CD4-positive, alpha-beta memory T cell (primary cell): ENCODE measurements at regions of chr19 and their contacts with region 1.

Region 1: GRCh38 chr19:42132851-42133528 is 744 bp upstream of the POU2F2 start:
- DNase-seq: peak; percentile 79 to 91 (median 84)
- H3K4me3 ChIP-seq: peak overlapping the region; percentile 43 to 97
- H3K4me3 Mint-ChIP-seq: peak overlapping the region; percentile 87 to 96 (median 92)
- H3K27ac ChIP-seq: peak overlapping the region; percentile 74
- H3K27ac Mint-ChIP-seq: peak overlapping the region; percentile 84 to 99 (median 88)
- H3K4me1 ChIP-seq: peaks cover 71% of the 10 kb centered on the region
- H3K4me1 Mint-ChIP-seq: peaks cover 39 to 87% (median 59%) of the 10 kb centered on the region in 4 donors
- H3K27me3 ChIP-seq: no peaks in the 10 kb centered on the region
- H3K27me3 Mint-ChIP-seq: no peaks in the 10 kb centered on the region

Region 2: DNA sequence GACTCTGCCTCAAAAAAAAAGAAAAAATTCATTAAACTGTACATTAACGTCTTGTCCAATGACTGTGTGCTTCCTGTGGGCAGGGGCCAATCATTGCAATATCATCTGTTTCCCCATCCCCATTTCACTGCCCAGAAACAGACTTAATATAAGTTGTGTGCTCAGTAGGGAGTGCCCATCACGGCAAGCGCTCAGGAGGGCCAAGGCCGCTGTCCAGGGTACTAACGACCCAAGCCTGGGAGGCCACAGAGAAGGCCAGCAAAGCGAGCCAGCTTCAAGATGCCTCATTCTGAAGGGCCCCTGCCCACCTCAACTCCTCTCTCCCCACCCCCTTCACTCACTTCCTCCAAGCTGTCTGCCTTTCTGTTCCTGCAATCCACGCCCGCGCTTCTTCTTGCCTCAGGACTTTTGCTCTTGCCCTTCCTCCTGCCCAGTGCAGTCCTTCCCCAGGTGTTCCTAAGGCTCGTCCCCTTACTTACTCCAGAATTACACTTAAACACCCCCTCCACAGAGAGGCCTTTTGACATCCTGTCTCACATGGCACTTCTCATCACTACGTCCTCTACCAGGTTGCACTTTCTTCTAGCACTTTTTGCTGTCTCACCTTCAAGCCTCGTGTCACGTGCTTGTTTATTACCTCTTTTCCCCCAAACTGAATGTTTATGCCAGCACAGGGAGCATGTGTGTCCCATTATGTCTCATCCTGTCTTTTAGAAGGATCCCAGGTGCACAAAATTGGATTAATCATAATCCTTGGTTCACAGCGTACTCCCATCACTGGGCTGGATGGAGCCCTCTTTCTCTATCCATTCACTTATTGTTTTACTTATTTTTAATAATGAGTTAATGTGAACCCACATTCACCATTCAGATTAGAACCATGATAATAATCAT is 10.6 kb after region 1 on chr19:
- CTCF ChIA-PET with region 1: interaction called, 16 read pairs
- POLR2A ChIA-PET with region 1: interaction called, 3 read pairs
- intact Hi-C with region 1: no loop called
- DNase-seq: no peak
- H3K4me3 ChIP-seq: no peak overlapping the region
- H3K4me3 Mint-ChIP-seq: peak overlapping the region in 1 of 8 donors; percentile 36
- H3K27ac ChIP-seq: no peak overlapping the region
- H3K27ac Mint-ChIP-seq: no peak overlapping the region
- H3K4me1 ChIP-seq: peaks cover 12% of the 10 kb centered on the region
- H3K4me1 Mint-ChIP-seq: peaks cover 8 to 12% (median 11%) of the 10 kb centered on the region in 4 donors
- H3K27me3 ChIP-seq: no peaks in the 10 kb centered on the region
- H3K27me3 Mint-ChIP-seq: no peaks in the 10 kb centered on the region

Region 3: DNA sequence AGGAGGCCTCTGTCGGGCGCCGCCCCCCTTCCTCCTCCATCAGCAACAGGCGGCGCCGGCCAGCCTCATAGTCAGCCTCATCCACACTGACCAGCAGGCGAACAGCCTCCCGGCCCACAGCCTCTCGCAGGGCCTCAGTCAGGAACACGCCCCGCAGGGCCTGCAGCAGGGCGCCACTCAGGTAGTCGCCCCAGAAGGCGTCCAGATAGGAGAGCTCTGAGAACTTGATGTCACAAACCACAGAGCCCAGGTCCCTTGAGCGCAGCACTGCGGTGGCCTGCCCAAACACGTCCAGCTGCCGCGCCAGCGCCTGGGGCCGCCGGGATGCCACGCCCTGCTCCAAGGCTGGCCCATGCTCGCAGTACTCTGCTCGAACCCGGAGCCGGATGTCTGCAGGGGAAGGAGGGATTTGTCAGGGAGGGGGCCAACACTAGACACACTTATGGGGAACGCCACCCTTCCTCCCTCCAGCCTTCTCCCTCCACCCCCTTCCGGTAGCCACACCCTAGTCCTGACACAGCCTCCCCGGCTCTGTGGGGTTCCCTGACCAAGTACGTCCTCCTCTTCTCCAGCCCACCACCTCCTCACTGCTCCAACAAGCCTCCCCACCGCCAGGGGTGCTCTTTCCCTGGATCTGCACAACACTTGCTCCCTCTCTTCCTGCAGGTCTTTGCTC is 66.6 kb after region 1 on chr19:
- CTCF ChIA-PET with region 1: interaction called, 7 read pairs
- POLR2A ChIA-PET with region 1: interaction called, 26 read pairs
- intact Hi-C with region 1: loop called (anchors 1 kb)
- DNase-seq: peak; percentile 53 to 75 (median 65)
- H3K4me3 ChIP-seq: peak overlapping the region; percentile 43 to 49
- H3K4me3 Mint-ChIP-seq: peak overlapping the region; percentile 80 to 93 (median 88)
- H3K27ac ChIP-seq: peak overlapping the region; percentile 86
- H3K27ac Mint-ChIP-seq: peak overlapping the region; percentile 86 to 96 (median 96)
- H3K4me1 ChIP-seq: peaks cover 94% of the 10 kb centered on the region
- H3K4me1 Mint-ChIP-seq: peaks cover 63 to 93% (median 78%) of the 10 kb centered on the region in 4 donors
- H3K27me3 ChIP-seq: no peaks in the 10 kb centered on the region
- H3K27me3 Mint-ChIP-seq: no peaks in the 10 kb centered on the region

Region 4: DNA sequence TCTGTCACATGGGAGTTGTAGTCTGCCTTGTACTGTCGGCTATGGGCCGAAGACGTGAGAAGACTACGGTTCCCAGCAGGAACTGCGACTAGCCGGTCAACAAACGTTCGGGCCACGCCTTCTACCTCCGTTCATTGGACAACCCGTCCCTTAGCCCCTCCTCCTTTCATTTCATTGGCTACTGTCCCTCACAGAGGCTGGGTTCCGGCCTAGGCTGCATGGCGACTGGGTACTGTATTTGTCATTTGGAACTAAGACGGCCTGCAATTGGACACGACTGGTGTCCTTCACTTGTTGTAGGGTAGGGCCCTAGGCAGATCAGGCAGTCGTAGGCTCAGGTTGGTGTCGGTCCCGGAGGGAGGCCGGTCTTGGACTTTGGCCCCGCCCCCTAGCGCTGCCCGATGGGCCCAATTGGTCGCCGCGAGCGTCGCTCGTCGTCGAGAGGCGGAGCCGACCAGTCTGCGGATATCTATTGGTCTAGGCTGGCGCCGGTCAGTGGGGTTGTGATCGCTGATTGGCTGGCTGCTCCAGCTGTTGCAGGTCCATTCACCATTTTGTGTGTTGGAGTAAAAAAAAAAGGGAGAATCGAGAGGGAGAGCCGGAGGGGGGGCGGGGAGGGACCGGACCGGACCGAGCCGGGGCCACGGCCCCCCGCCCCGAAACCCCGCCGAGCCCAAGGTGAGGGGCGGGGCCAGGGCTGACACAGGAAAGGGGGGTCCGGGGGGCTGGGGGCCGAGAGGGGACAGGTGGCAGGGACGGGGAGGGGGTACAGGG is 135.9 kb after region 1 on chr19 and contains the start of gene CIC:
- CTCF ChIA-PET with region 1: interaction called, 3 read pairs
- POLR2A ChIA-PET with region 1: interaction called, 4 read pairs
- intact Hi-C with region 1: loop called (anchors 1 kb)
- DNase-seq: peak; percentile 100
- H3K4me3 ChIP-seq: peak within 1 kb of the TSS; percentile 83 to 96
- H3K4me3 Mint-ChIP-seq: peak within 1 kb of the TSS in 4 of 8 donors; percentile 89 to 94 (median 92)
- H3K27ac ChIP-seq: peak within 1 kb of the TSS; percentile 99
- H3K27ac Mint-ChIP-seq: peak within 1 kb of the TSS in 4 of 7 donors; percentile 96 to 99 (median 98)
- H3K4me1 ChIP-seq: peaks cover 33% of the 10 kb centered on the region
- H3K4me1 Mint-ChIP-seq: peaks cover 0 to 29% (median 26%) of the 10 kb centered on the region in 4 donors
- H3K27me3 ChIP-seq: no peaks in the 10 kb centered on the region
- H3K27me3 Mint-ChIP-seq: no peaks in the 10 kb centered on the region
- total RNA-seq, gene CIC: 81.6 to 82.6 TPM

Region 5: GRCh38 chr19:42325273-42325895 is 192.4 kb after region 1 on chr19 and contains the start of gene MEGF8:
- CTCF ChIA-PET with region 1: interaction called, 4 read pairs
- POLR2A ChIA-PET with region 1: no interaction called
- intact Hi-C with region 1: loop called (anchors 1 kb)
- DNase-seq: peak; percentile 97 to 99 (median 99)
- H3K4me3 ChIP-seq: peak within 1 kb of the TSS; percentile 66 to 90
- H3K4me3 Mint-ChIP-seq: peak within 1 kb of the TSS; percentile 89 to 95 (median 92)
- H3K27ac ChIP-seq: peak within 1 kb of the TSS; percentile 81
- H3K27ac Mint-ChIP-seq: peak within 1 kb of the TSS; percentile 85 to 91 (median 90)
- H3K4me1 ChIP-seq: peaks cover 19% of the 10 kb centered on the region
- H3K4me1 Mint-ChIP-seq: peaks cover 7 to 31% (median 20%) of the 10 kb centered on the region in 4 donors
- H3K27me3 ChIP-seq: no peaks in the 10 kb centered on the region
- H3K27me3 Mint-ChIP-seq: peaks cover 5 to 12% of the 10 kb centered on the region in 2 donors
- total RNA-seq, gene MEGF8: 8.6 to 9.5 TPM